K562 (cell line): ENCODE measurements at regions of chr3 and their contacts with region 1.

Region 1: GRCh38 chr3:124887177-124887931 is at the start of gene ITGB5:
- DNase-seq: peak; percentile 74 to 80 (median 78)
- ATAC-seq: peak; percentile 88
- H3K4me3 ChIP-seq: peak within 1 kb of the TSS; percentile 60
- H3K27ac ChIP-seq: peak within 1 kb of the TSS; percentile 52; the same call in 2 of the 3 replicates
- H3K4me1 ChIP-seq: peaks cover 18 to 22% of the 10 kb centered on the region in 2 experiments; a peak in 4 of 5 replicates
- H3K27me3 ChIP-seq: no peaks in the 10 kb centered on the region; a peak in 1 of 5 replicates
- CTCF ChIP-seq: no peak
- EP300 ChIP-seq: no peak
- POLR2A ChIP-seq: peak; percentile 67
- RAD21 ChIP-seq: no peak
- polyA plus RNA-seq, gene ITGB5: 1.7 to 2.3 TPM

Region 2: GRCh38 chr3:124772081-124772831 is 115.1 kb before region 1 on chr3:
- CTCF ChIA-PET with region 1: no interaction called
- POLR2A ChIA-PET with region 1: no interaction called
- in situ Hi-C with region 1: no loop called
- intact Hi-C with region 1: loop called (anchors 5 kb)
- DNase-seq: peak; percentile 55 to 84 (median 64)
- ATAC-seq: peak; percentile 85
- H3K4me3 ChIP-seq: no peak overlapping the region
- H3K27ac ChIP-seq: no peak overlapping the region
- H3K4me1 ChIP-seq: peaks cover 5 to 8% of the 10 kb centered on the region in 2 experiments; a peak in 4 of 5 replicates
- H3K27me3 ChIP-seq: no peaks in the 10 kb centered on the region; a peak in 1 of 5 replicates
- CTCF ChIP-seq: no peak
- EP300 ChIP-seq: peak; percentile 84
- POLR2A ChIP-seq: no peak
- RAD21 ChIP-seq: no peak

Region 3: GRCh38 chr3:124818398-124819091 is 68.8 kb before region 1 on chr3:
- CTCF ChIA-PET with region 1: no interaction called
- POLR2A ChIA-PET with region 1: no interaction called
- in situ Hi-C with region 1: no loop called
- intact Hi-C with region 1: no loop called
- DNase-seq: no peak
- ATAC-seq: no peak
- H3K4me3 ChIP-seq: no peak overlapping the region
- H3K27ac ChIP-seq: no peak overlapping the region
- H3K4me1 ChIP-seq: peaks cover 0 to 3% of the 10 kb centered on the region in 2 experiments; a peak in 3 of 5 replicates
- H3K27me3 ChIP-seq: no peaks in the 10 kb centered on the region
- CTCF ChIP-seq: no peak
- EP300 ChIP-seq: no peak
- POLR2A ChIP-seq: no peak
- RAD21 ChIP-seq: no peak

Region 4: DNA sequence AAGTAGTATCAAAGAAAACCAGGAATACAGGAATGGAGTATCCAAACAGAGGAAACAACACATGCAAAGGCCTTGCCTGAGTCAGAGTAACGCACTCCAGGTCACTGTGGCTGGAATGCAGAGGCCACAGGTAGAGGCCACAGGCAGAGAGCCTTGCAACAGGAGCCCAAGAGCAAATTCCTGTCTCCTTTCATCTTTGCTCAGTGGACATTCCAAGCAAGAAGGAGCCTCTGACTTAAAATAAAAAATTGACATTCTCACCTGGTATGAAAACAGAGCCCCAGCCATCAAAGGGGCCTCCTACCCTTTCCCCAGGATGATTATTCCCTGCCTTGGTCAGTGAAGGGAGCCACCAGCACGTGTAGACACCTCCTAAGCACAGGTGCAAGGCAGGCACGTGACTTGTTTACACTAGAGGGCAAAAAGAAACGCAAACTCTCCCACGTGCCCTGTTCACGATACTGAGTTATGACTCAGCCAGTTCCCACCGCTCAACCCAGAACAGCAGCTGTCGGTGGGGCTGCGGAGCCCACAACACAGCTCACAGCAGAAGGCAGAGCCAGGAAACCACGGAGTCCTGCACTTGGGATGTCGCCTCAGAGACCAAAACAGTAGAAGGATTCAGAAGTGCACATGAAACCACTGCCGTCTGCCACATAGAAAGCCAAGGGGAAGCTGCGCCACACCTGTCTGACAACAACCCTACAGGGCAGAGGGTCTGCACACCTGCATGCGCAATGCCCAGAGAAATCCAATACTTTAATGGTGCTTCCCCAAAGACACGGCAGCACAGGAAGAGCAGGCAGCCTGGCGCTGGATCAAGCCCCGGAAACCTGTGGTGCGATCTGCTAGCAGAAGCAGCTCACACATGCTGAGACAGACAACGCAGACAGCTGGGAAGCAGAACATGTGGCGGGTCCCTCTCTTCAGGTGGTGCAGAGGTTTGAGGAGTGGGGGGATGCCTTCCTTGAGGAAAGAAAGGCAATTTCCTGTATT is 52.3 kb before region 1 on chr3:
- CTCF ChIA-PET with region 1: no interaction called
- POLR2A ChIA-PET with region 1: no interaction called
- in situ Hi-C with region 1: no loop called
- intact Hi-C with region 1: loop called (anchors 10 kb)
- DNase-seq: peak in 3 of 4 experiments; percentile 17 to 23 (median 21)
- ATAC-seq: peak; percentile 78
- H3K4me3 ChIP-seq: no peak overlapping the region
- H3K27ac ChIP-seq: no peak overlapping the region; the same call in 2 of the 3 replicates
- H3K4me1 ChIP-seq: peaks cover 9 to 24% of the 10 kb centered on the region in 2 experiments; a peak in 4 of 5 replicates
- H3K27me3 ChIP-seq: no peaks in the 10 kb centered on the region
- CTCF ChIP-seq: no peak
- EP300 ChIP-seq: no peak
- POLR2A ChIP-seq: no peak
- RAD21 ChIP-seq: no peak